HepG2 (cell line): ENCODE measurements at regions of chr7 and their contacts with region 1.

Region 1: DNA sequence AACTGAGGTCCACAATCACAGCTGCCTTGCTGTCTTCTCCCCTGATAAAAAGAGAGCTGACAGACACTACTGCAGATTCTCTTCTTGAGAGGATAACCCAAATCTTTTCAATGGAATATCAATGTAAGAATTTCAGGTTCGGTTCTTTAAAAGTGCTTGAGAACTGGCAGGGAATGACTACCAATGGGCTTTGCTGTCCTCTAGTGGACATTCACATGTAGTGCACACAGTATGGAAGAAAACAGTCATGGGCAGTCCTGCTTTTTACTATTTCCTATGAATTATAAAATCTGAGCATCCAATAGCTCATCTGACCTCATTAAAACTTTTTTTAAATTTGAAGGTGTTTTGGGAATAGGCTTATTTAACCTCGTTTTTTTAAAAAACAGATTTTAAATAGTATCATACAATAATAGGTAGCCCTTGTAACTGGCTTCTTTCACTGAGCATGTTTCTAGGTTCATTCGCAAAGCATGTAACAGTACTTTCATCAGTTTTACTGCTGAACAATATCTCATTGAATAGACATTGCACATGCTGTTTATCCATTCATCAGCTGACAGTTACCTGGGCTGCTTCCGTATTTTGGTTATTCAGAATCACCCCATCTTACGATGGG is 18.3 kb downstream of the FZD9 start:
- DNase-seq: peak; percentile 57
- ATAC-seq: peak; percentile 51
- H3K4me3 ChIP-seq: no peak overlapping the region
- H3K27ac ChIP-seq: no peak overlapping the region
- H3K4me1 ChIP-seq: peaks cover 28% of the 10 kb centered on the region
- H3K27me3 ChIP-seq: no peaks in the 10 kb centered on the region
- CTCF ChIP-seq: peak; percentile 86
- EP300 ChIP-seq: no peak
- POLR2A ChIP-seq: no peak
- RAD21 ChIP-seq: peak; percentile 88

Region 2: GRCh38 chr7:73329861-73330581 is 121.9 kb before region 1 on chr7:
- CTCF ChIA-PET with region 1: no interaction called
- POLR2A ChIA-PET with region 1: no interaction called
- in situ Hi-C with region 1: no loop called
- intact Hi-C with region 1: loop called (anchors 2 kb)
- DNase-seq: no peak
- ATAC-seq: peak; percentile 30
- H3K4me3 ChIP-seq: peak overlapping the region in 2 of 3 experiments; percentile 5 to 29; a peak in 3 of 6 replicates
- H3K27ac ChIP-seq: no peak overlapping the region
- H3K4me1 ChIP-seq: peaks cover 53% of the 10 kb centered on the region
- H3K27me3 ChIP-seq: peaks cover 2 to 23% of the 10 kb centered on the region in 2 experiments; a peak in 2 of 5 replicates
- CTCF ChIP-seq: no peak
- EP300 ChIP-seq: no peak
- POLR2A ChIP-seq: no peak
- RAD21 ChIP-seq: no peak

Region 3: DNA sequence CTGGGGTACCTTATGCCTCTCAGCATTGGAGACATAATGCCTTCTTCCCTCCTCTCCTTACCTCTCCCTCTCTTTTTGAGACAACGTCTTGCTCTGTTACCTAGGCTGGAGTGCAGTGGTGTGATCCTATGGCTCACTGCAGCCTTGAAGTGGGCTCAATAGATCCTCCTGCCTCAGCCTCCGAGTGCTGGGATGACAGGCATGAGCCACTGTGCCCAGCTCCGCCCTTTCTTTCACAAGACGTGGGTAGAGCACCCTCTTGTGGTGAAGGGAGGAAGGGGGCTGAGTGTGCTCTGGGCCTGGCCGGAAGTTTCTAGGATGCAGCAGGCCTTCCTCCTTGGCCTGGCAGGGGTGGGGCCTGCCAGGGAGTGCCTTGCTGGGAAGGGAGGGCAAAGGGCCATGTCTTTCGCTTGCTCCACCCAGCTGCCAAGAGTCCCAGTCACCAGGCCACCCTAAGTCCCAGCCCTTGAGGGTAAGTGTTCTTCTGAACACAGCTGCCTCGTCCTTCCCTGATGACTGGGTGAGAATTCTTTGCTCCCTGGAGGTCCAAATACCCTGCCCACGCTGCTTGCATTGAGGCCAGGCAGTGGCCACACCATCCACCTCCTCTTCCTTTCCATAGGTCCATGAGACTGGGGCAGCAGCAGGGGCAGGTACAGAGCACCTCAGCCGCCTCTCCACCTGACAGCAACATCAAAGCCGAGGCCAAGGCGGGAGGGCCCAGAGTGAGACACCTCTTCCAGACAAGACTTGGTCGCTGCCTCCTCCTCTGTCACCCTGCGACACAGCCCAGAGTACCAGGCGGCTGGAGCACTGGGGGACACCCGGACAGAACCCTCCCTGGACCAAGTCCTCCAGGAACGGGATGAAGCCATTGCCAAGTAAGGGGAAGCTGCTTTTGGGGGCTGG is 283.0 kb after region 1 on chr7:
- CTCF ChIA-PET with region 1: no interaction called
- POLR2A ChIA-PET with region 1: no interaction called
- in situ Hi-C with region 1: no loop called
- intact Hi-C with region 1: loop called (anchors 2 kb)
- DNase-seq: peak; percentile 77
- ATAC-seq: peak; percentile 74
- H3K4me3 ChIP-seq: no peak overlapping the region
- H3K27ac ChIP-seq: no peak overlapping the region
- H3K4me1 ChIP-seq: peaks cover 28% of the 10 kb centered on the region
- H3K27me3 ChIP-seq: no peaks in the 10 kb centered on the region
- CTCF ChIP-seq: peak; percentile 98
- EP300 ChIP-seq: no peak
- POLR2A ChIP-seq: no peak
- RAD21 ChIP-seq: peak; percentile 85